Prostate gland (tissue), 2 donors: ENCODE measurements at regions of chr5 and their contacts with region 1.

Region 1: GRCh38 chr5:58501778-58502417 is 10.7 kb downstream of the GAPT start:
- DNase-seq: no peak
- H3K4me3 ChIP-seq: no peak overlapping the region
- H3K27ac ChIP-seq: no peak overlapping the region
- H3K4me1 ChIP-seq: no peaks in the 10 kb centered on the region
- H3K27me3 ChIP-seq: no peaks in the 10 kb centered on the region
- CTCF ChIP-seq: no peak
- POLR2A ChIP-seq: no peak

Region 2: DNA sequence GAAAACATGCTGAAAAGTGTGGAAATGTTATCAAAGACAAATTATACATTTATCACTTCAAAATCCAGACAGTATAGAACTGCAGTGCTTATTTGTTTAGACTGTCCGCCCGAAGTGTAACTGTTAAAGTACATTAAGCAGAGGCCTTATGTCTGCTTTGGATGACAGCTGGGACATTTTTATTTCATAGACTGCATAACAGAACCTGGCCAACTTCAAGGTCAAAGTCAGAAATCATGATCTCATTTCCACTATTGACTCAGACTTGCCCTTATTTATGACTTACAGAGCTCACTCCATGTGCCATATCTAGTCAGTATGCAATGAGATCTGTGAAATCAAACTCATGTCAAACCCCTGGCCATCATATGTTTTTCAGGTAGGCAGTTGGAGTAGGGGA is 168.7 kb after region 1 on chr5:
- intact Hi-C with region 1: no loop called
- DNase-seq: no peak
- H3K4me3 ChIP-seq: no peak overlapping the region
- H3K27ac ChIP-seq: no peak overlapping the region
- H3K4me1 ChIP-seq: no peaks in the 10 kb centered on the region
- H3K27me3 ChIP-seq: no peaks in the 10 kb centered on the region
- CTCF ChIP-seq: no peak
- POLR2A ChIP-seq: no peak

Region 3: GRCh38 chr5:58849921-58850667 is 348.2 kb after region 1 on chr5:
- intact Hi-C with region 1: loop called (anchors 5 kb)
- DNase-seq: peak; percentile 16
- H3K4me3 ChIP-seq: no peak overlapping the region
- H3K27ac ChIP-seq: no peak overlapping the region
- H3K4me1 ChIP-seq: no peaks in the 10 kb centered on the region
- H3K27me3 ChIP-seq: no peaks in the 10 kb centered on the region
- CTCF ChIP-seq: peak in 2 of 4 experiments; percentile 39 to 40
- POLR2A ChIP-seq: no peak